ENCODE measurements at regions of chr22 and their contacts with region 1.

Region 1: GRCh38 chr22:20430720-20431510 is 6.7 kb downstream of the SCARF2 start:
- DNase-seq: peak; percentile 48
- H3K4me3 ChIP-seq: peak overlapping the region in 2 of 3 experiments; percentile 14 to 37
- H3K27ac ChIP-seq: no peak overlapping the region
- H3K4me1 ChIP-seq: peaks cover 14% of the 10 kb centered on the region
- H3K27me3 ChIP-seq: peaks cover 7% of the 10 kb centered on the region
- CTCF ChIP-seq: peak; percentile 22 to 50

Region 2: GRCh38 chr22:20469110-20469868 is 38.4 kb after region 1 on chr22:
- CTCF ChIA-PET with region 1: no interaction called
- dilution Hi-C with region 1: loop called (anchors 5 kb)
- in situ Hi-C with region 1: no loop called
- intact Hi-C with region 1: no loop called
- DNase-seq: no peak
- H3K4me3 ChIP-seq: no peak overlapping the region
- H3K27ac ChIP-seq: no peak overlapping the region
- H3K4me1 ChIP-seq: no peaks in the 10 kb centered on the region
- H3K27me3 ChIP-seq: no peaks in the 10 kb centered on the region
- CTCF ChIP-seq: no peak